Sigmoid colon (tissue), 7 donors: ENCODE measurements at regions of chr5 and their contacts with region 1.

Region 1: GRCh38 chr5:43040287-43041098 is at the start of gene ANXA2R:
- DNase-seq: peak; percentile 92
- H3K4me3 ChIP-seq: peak within 1 kb of the TSS; percentile 60 to 67 (median 64)
- H3K27ac ChIP-seq: peak within 1 kb of the TSS; percentile 89 to 92 (median 89)
- H3K4me1 ChIP-seq: peaks cover 0 to 47% (median 31%) of the 10 kb centered on the region in 4 donors
- H3K27me3 ChIP-seq: peaks cover 20 to 89% (median 50%) of the 10 kb centered on the region in 3 donors
- CTCF ChIP-seq: peak; percentile 49 to 78 (median 62)
- EP300 ChIP-seq: no peak
- POLR2A ChIP-seq: peak in 1 of 2 donors; percentile 12
- total RNA-seq, gene ANXA2R: 1.8 to 4.4 (median 3.7) TPM

Region 2: DNA sequence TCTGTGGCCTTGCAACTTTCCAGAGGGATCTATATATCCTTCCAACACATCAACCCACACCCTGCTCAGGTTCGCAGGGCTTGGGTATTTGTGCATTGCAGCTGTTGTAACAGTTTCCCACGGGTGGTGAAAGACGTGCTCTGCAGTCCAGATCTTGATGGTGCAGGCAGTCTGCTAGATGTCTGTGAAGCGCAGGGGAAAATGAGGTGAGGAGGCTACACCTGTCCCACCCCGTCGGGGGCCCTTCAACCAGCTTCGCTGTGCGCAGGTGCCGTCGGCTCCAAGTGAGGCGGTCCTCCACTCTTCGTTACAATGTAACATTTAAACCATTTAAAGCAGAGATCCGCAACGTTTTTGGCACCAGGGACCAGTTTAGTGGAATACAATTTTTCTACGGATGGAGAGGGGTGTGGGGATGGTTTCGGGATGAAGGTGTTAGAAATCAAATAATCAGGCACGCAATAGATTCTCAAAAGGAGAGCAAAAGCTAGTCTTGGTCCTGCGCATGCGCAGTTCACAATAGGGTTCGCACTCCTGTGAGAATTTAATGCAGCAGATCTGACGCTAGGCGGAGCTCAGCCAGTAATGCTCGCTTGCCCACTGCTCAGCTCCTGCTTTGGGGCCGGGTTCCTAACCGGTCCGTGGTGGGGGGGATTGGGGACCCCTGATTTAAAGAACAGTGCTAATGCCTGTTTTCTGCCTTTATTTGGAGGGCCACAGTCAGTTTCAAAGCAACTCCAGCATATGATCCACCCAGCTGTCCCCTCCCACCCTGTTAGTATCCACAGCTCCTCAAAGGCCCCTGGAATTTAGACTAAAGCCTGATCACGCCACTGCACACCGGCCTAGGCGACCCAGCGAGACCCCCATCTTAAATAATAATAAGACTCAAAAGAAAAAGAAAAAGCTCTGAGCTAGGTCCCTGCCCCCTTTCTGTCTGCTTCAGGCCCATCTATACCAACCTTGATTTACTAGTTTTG is 131.7 kb before region 1 on chr5:
- intact Hi-C with region 1: loop called (anchors 5 kb)
- DNase-seq: peak; percentile 94
- H3K4me3 ChIP-seq: peak overlapping the region; percentile 32 to 51 (median 47)
- H3K27ac ChIP-seq: no peak overlapping the region
- H3K4me1 ChIP-seq: peaks cover 0 to 5% (median 4%) of the 10 kb centered on the region in 4 donors
- H3K27me3 ChIP-seq: peaks cover 0 to 7% (median 0%) of the 10 kb centered on the region in 3 donors
- CTCF ChIP-seq: peak; percentile 65 to 86 (median 79)
- EP300 ChIP-seq: no peak
- POLR2A ChIP-seq: no peak

Region 3: GRCh38 chr5:42950440-42951292 is 89.8 kb before region 1 on chr5:
- intact Hi-C with region 1: loop called (anchors 5 kb)
- DNase-seq: peak; percentile 85
- H3K4me3 ChIP-seq: peak overlapping the region; percentile 25 to 48 (median 40)
- H3K27ac ChIP-seq: peak overlapping the region; percentile 63 to 84 (median 68)
- H3K4me1 ChIP-seq: peaks cover 0 to 35% (median 32%) of the 10 kb centered on the region in 4 donors
- H3K27me3 ChIP-seq: peaks cover 52 to 100% (median 92%) of the 10 kb centered on the region in 3 donors
- CTCF ChIP-seq: no peak
- EP300 ChIP-seq: no peak
- POLR2A ChIP-seq: no peak

Region 4: DNA sequence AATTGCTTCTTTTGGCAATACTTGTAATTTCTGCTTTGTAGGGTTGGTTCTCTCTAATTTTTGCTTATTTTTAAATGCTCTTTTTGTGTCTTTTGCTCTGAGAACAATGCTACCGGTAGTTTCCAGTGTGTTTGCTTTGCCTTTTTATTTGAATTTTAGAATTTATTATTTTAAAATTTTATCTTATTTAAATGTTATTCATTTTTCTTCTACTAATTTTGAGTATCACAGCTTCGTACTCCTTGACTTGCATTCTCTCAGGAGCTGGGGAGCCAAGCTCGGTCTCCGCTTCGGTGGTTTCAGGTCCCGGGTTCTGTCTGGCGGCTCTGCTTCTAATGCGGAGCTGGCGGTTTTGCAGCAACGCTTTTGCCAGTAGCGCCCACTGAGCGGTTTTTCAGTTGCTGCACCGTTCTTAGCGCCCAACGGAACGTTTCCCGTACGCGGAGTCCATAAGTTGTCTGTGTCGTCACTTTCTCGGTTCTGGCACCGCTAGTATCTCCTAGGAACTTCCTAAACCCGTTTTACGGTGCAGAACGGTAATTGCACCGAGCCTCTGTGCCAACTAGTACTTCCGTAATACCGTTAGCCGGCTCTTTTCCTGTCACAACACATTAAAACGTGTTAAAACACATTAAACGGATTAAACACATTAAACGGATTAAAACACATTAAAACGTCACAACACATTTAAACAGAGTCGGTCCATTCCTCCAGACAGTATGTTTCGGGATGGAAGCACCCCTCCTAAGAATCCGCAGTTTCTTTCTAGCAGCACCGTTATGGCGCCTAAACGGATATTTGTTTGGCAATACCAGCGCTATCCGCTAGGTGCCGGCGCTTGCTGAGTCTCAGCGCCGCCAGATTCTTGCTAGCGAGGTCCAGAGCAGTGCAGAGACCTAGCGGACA is 46.0 kb before region 1 on chr5:
- intact Hi-C with region 1: loop called (anchors 2 kb)
- DNase-seq: peak; percentile 90
- H3K4me3 ChIP-seq: peak overlapping the region; percentile 10 to 53 (median 29)
- H3K27ac ChIP-seq: peak overlapping the region; percentile 61 to 88 (median 73)
- H3K4me1 ChIP-seq: peaks cover 0 to 28% (median 16%) of the 10 kb centered on the region in 4 donors
- H3K27me3 ChIP-seq: peaks cover 46 to 100% (median 90%) of the 10 kb centered on the region in 3 donors
- CTCF ChIP-seq: peak; percentile 57 to 86 (median 81)
- EP300 ChIP-seq: no peak
- POLR2A ChIP-seq: no peak

Region 5: DNA sequence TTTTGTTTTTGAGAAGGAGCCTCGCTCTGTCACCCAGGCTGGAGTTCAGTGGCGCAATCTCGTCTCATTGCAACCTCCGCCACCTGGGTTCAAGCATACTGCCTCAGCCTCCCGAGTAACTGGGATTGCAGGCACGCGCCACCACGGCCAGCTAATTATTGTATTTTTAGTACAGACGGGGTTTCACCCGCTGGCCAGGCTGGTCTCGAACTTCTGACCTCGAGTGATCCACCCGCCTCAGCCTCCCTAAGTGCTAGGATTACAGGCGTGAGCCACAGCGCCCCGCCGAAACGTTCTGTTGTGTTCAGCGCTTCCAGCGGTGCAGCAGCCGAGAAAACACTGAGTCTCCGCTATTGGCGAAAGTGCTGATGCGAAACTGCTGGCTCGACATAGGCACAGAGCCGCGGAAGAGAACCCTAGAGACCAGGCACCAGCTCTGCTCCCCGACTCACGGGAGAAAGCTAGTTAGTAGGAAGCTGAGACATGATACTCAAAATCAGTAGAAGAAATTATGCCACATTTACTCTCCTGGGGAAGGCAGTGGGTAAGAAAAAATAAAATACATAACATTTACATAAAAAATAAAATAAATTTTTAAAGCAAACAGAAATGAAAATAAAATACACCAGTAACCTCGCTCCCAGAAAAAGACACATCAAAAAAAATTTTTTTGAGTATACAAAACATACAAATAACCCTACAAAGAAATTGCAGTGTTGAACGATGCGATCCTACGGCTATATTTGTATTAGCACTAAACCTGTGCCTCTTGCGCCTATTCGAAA is 31.9 kb before region 1 on chr5:
- intact Hi-C with region 1: loop called (anchors 5 kb)
- DNase-seq: peak; percentile 91
- H3K4me3 ChIP-seq: peak overlapping the region; percentile 23 to 48 (median 42)
- H3K27ac ChIP-seq: peak overlapping the region; percentile 73 to 81 (median 80)
- H3K4me1 ChIP-seq: peaks cover 0 to 19% (median 6%) of the 10 kb centered on the region in 4 donors
- H3K27me3 ChIP-seq: peaks cover 23 to 73% (median 47%) of the 10 kb centered on the region in 3 donors
- CTCF ChIP-seq: no peak
- EP300 ChIP-seq: no peak
- POLR2A ChIP-seq: peak; percentile 40 to 68

Region 6: GRCh38 chr5:43019614-43020293 is 20.7 kb before region 1 on chr5:
- intact Hi-C with region 1: loop called (anchors 2 kb)
- DNase-seq: no peak
- H3K4me3 ChIP-seq: peak overlapping the region; percentile 7 to 53 (median 44)
- H3K27ac ChIP-seq: peak overlapping the region; percentile 78 to 86 (median 84)
- H3K4me1 ChIP-seq: peaks cover 0 to 17% (median 15%) of the 10 kb centered on the region in 4 donors
- H3K27me3 ChIP-seq: peaks cover 31 to 90% (median 60%) of the 10 kb centered on the region in 3 donors
- CTCF ChIP-seq: peak in 1 of 4 experiments; percentile 41
- EP300 ChIP-seq: no peak
- POLR2A ChIP-seq: no peak

Region 7: DNA sequence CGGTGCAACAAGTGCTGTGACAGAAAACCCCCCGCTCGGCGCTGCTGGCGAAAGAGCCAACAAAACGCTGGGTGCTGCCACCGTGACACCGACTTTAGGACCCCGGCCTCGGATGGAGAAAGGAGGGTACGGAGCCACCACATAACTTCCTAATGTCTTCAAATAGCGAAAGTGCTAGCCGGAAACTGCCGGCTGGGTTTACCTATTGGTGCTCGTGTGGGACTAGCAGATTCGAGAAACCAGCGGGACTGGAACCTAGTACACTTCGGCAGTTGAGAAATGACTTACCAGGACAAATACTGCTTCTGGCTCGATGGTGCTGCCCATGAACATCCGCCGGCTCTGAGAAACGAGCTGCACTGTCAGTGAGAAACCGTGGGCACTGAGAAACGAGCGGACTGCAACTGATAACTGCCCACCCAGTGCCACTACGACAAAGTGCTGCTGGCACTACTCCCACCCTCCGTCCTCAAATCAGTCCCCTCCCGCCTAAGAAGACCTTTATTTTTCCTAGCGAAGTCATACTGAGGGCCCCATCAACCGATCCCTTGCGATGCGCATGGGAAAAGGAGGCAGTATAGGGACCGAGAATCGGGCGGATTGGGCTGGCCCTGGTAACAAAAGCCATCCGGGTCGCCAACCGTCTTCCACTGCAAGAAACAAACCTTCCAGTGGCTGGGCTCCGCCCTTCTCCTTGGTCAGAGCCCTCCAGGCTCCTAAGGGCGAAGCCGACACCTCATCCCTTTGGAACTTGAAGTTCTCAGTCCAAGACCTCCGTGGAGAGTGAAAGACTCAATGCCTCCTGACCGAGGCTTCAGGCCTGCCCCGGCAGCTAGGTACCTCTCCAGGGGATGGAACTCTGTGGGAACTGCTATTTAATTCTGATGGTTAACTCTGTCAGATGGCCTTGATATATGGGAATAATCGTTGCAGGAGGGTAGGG is 26.6 kb after region 1 on chr5:
- intact Hi-C with region 1: loop called (anchors 1 kb)
- DNase-seq: peak; percentile 93
- H3K4me3 ChIP-seq: peak overlapping the region; percentile 65 to 91 (median 80)
- H3K27ac ChIP-seq: peak overlapping the region; percentile 94 to 100 (median 98)
- H3K4me1 ChIP-seq: peaks cover 0 to 38% (median 25%) of the 10 kb centered on the region in 4 donors
- H3K27me3 ChIP-seq: no peaks in the 10 kb centered on the region
- CTCF ChIP-seq: no peak
- EP300 ChIP-seq: no peak
- POLR2A ChIP-seq: peak; percentile 78 to 83